Endothelial cell of umbilical vein (primary cell): ENCODE measurements at regions of chr3 and their contacts with region 1.

Region 1: DNA sequence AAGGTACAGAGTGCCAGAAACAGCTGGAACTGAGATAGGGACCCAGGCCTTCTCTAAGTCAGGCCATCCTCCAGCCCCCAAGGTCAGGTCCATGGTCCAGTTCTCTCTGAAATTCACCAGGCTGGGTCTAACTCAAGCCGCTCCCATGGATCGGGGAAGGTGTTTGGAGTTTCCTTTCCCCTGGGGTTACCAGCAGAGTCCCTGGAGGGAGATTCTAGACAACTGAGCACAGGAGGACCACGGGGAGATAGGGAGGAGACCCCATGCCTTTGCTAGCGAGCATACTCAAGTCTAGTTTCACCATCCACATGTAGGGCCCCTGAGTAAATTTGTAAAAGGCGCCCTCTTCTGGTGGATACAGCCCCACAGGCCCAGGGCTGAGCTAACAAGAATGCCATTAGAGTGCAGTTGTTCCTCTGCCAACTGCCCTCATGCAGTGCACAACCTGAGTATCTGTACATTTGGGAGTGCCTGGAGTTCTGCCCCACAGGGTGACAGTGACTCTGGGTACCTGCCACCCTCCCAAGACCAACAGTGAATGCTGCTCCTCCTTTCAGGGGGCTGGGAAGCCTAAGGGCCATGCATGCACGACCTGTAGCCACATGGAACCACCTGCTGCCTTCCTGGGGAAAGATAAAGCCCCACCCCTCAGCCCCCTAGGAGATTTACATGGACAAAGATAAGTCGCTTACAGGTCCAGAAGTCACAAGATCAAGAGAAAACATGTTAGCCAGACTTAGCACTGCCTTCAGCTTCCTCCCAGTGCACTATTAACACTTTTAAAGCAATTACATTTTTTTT is 89.0 kb downstream of the IQSEC1 start:
- DNase-seq: peak; percentile 77
- H3K4me3 ChIP-seq: no peak overlapping the region
- H3K27ac ChIP-seq: no peak overlapping the region
- H3K4me1 ChIP-seq: no peaks in the 10 kb centered on the region
- H3K27me3 ChIP-seq: peaks cover 3 to 11% of the 10 kb centered on the region in 2 experiments
- CTCF ChIP-seq: peak; percentile 76 to 86
- POLR2A ChIP-seq: no peak

Region 2: GRCh38 chr3:12201813-12202212 is 782.4 kb before region 1 on chr3:
- CTCF ChIA-PET with region 1: no interaction called
- POLR2A ChIA-PET with region 1: no interaction called
- dilution Hi-C with region 1: no loop called
- intact Hi-C with region 1: loop called (anchors 10 kb)
- DNase-seq: no peak
- H3K4me3 ChIP-seq: no peak overlapping the region
- H3K27ac ChIP-seq: no peak overlapping the region
- H3K4me1 ChIP-seq: peaks cover 4% of the 10 kb centered on the region
- H3K27me3 ChIP-seq: no peaks in the 10 kb centered on the region
- CTCF ChIP-seq: no peak
- POLR2A ChIP-seq: no peak

Region 3: GRCh38 chr3:12891985-12892839 is 92.0 kb before region 1 on chr3:
- CTCF ChIA-PET with region 1: interaction called, 20 read pairs
- POLR2A ChIA-PET with region 1: no interaction called
- dilution Hi-C with region 1: no loop called
- intact Hi-C with region 1: loop called (anchors 1 kb)
- DNase-seq: peak; percentile 57
- H3K4me3 ChIP-seq: no peak overlapping the region
- H3K27ac ChIP-seq: no peak overlapping the region
- H3K4me1 ChIP-seq: no peaks in the 10 kb centered on the region
- H3K27me3 ChIP-seq: peaks cover 7 to 9% of the 10 kb centered on the region in 2 experiments
- CTCF ChIP-seq: peak; percentile 69 to 76
- POLR2A ChIP-seq: no peak

Region 4: DNA sequence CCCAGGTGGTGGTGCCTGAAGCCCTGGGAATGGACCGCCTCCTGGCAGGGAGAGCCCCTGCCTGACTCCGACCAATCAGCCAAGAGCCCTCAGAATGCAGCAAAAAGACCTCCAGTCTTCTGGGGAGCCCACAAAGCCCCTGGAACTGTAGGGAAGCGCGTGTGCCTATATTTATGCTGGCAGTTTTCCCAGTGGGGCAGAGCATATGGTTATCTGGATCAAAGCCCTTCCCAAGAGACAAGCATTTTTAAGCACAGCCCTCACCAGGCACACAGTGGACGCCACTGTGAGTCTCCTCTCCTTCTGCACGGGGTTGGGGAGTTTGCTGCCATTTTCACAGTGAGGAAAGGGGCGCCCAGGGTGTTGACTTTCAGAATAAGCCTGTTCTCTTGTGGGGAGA is 61.9 kb before region 1 on chr3:
- CTCF ChIA-PET with region 1: interaction called, 6 read pairs
- POLR2A ChIA-PET with region 1: no interaction called
- dilution Hi-C with region 1: no loop called
- intact Hi-C with region 1: loop called (anchors 1 kb)
- DNase-seq: peak; percentile 21
- H3K4me3 ChIP-seq: no peak overlapping the region
- H3K27ac ChIP-seq: no peak overlapping the region
- H3K4me1 ChIP-seq: peaks cover 17% of the 10 kb centered on the region
- H3K27me3 ChIP-seq: no peaks in the 10 kb centered on the region
- CTCF ChIP-seq: no peak
- POLR2A ChIP-seq: no peak

Region 5: GRCh38 chr3:12954891-12955650 is 29.2 kb before region 1 on chr3:
- CTCF ChIA-PET with region 1: interaction called, 39 read pairs
- POLR2A ChIA-PET with region 1: no interaction called
- dilution Hi-C with region 1: no loop called
- intact Hi-C with region 1: no loop called
- DNase-seq: peak; percentile 55
- H3K4me3 ChIP-seq: no peak overlapping the region
- H3K27ac ChIP-seq: no peak overlapping the region
- H3K4me1 ChIP-seq: peaks cover 15% of the 10 kb centered on the region
- H3K27me3 ChIP-seq: no peaks in the 10 kb centered on the region
- CTCF ChIP-seq: no peak
- POLR2A ChIP-seq: no peak

Region 6: DNA sequence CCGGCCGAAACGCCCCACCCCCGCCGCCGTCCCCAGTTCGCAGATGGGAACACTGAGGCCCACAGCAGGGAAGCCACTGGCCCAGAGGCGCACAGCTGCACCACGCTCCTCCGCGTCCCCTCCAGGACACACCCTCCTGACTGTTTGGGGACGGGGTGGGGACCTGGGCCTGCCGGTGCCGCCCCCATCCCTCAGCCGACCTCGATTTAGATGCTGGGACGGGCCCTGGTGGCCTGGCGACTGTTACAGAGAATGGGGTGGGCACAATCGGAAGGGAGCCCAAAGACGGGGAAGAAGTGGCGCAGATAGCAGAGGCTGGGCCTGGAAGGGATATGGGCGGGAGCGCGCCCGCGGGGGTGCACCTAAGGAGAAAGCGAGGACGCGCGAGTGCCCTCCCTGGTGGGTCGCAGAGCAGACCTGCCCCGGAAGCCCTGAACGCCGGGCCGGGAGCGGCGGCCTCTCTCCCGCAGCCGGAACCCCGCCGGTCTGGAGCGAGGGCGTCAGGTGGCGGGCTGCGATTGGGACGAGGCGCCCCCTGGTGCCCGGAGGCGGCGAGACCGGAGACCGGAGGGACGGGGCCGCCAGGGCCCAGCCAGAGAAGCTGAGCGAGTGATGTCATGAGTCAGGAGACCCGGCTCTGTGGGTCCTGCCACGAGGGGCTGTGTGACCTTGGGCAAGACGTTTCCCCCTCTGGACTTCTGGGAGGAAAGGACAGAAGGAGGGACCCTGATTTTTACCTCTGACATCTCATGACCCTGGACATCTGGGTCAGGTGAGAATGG is 10.6 kb after region 1 on chr3:
- CTCF ChIA-PET with region 1: interaction called, 68 read pairs
- POLR2A ChIA-PET with region 1: no interaction called
- dilution Hi-C with region 1: no loop called
- intact Hi-C with region 1: no loop called
- DNase-seq: peak; percentile 79
- H3K4me3 ChIP-seq: peak overlapping the region; percentile 30 to 49 (median 41)
- H3K27ac ChIP-seq: no peak overlapping the region
- H3K4me1 ChIP-seq: peaks cover 5% of the 10 kb centered on the region
- H3K27me3 ChIP-seq: peaks cover 8 to 22% of the 10 kb centered on the region in 2 experiments
- CTCF ChIP-seq: peak; percentile 95 to 97
- POLR2A ChIP-seq: no peak

Region 7: GRCh38 chr3:13276438-13277195 is 292.4 kb after region 1 on chr3:
- CTCF ChIA-PET with region 1: no interaction called
- POLR2A ChIA-PET with region 1: no interaction called
- dilution Hi-C with region 1: no loop called
- intact Hi-C with region 1: no loop called
- DNase-seq: no peak
- H3K4me3 ChIP-seq: no peak overlapping the region
- H3K27ac ChIP-seq: no peak overlapping the region
- H3K4me1 ChIP-seq: no peaks in the 10 kb centered on the region
- H3K27me3 ChIP-seq: peaks cover 4 to 5% of the 10 kb centered on the region in 2 experiments
- CTCF ChIP-seq: no peak
- POLR2A ChIP-seq: no peak